H1 (cell line): ENCODE measurements at regions of chr13 and their contacts with region 1.

Region 1: GRCh38 chr13:45194081-45194939 is 6.5 kb downstream of the KCTD4 start:
- DNase-seq: peak in 1 of 2 experiments; percentile 9
- H3K4me3 ChIP-seq: no peak overlapping the region
- H3K27ac ChIP-seq: no peak overlapping the region
- H3K4me1 ChIP-seq: no peaks in the 10 kb centered on the region
- H3K27me3 ChIP-seq: no peaks in the 10 kb centered on the region
- CTCF ChIP-seq: peak; percentile 52 to 71 (median 60)
- EP300 ChIP-seq: no peak
- POLR2A ChIP-seq: no peak
- RAD21 ChIP-seq: peak; percentile 66 to 74

Region 2: GRCh38 chr13:45004096-45004495 is 190.2 kb before region 1 on chr13:
- CTCF ChIA-PET with region 1: no interaction called
- POLR2A ChIA-PET with region 1: no interaction called
- DNase-seq: no peak
- H3K4me3 ChIP-seq: no peak overlapping the region
- H3K27ac ChIP-seq: no peak overlapping the region
- H3K4me1 ChIP-seq: no peaks in the 10 kb centered on the region
- H3K27me3 ChIP-seq: no peaks in the 10 kb centered on the region
- CTCF ChIP-seq: no peak
- EP300 ChIP-seq: no peak
- POLR2A ChIP-seq: no peak
- RAD21 ChIP-seq: no peak

Region 3: DNA sequence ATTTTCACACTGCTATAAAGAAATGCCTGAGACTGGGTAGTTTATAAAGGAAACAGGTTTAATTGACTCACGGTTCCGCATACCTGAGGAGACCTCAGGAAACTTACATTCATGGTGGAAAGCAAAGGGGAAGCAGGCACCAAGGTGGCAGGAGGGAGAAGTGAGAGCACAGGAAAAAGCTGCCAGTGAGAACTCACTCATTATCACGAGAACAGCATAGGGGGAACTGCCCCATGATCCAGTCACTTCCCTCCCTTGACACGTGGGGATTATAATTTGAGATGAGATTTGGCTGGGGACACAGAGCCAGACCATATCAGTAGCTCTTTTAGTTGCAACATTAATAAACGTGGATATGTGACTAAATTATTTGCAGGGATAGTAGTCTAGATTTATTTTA is 10.8 kb after region 1 on chr13:
- CTCF ChIA-PET with region 1: interaction called, 10 read pairs
- POLR2A ChIA-PET with region 1: no interaction called
- DNase-seq: no peak
- H3K4me3 ChIP-seq: no peak overlapping the region
- H3K27ac ChIP-seq: no peak overlapping the region
- H3K4me1 ChIP-seq: peaks cover 0 to 3% (median 0%) of the 10 kb centered on the region in 4 experiments; a peak in 2 of 7 replicates
- H3K27me3 ChIP-seq: no peaks in the 10 kb centered on the region
- CTCF ChIP-seq: no peak
- EP300 ChIP-seq: no peak
- POLR2A ChIP-seq: no peak
- RAD21 ChIP-seq: no peak

Region 4: GRCh38 chr13:45310341-45311125 is 116.2 kb after region 1 on chr13:
- CTCF ChIA-PET with region 1: interaction called, 11 read pairs
- POLR2A ChIA-PET with region 1: no interaction called
- DNase-seq: no peak
- H3K4me3 ChIP-seq: peak overlapping the region; percentile 9 to 65 (median 44); a peak in 7 of 8 replicates
- H3K27ac ChIP-seq: no peak overlapping the region
- H3K4me1 ChIP-seq: peaks cover 0 to 17% (median 12%) of the 10 kb centered on the region in 4 experiments
- H3K27me3 ChIP-seq: no peaks in the 10 kb centered on the region
- CTCF ChIP-seq: no peak
- EP300 ChIP-seq: no peak
- POLR2A ChIP-seq: no peak
- RAD21 ChIP-seq: no peak

Region 5: DNA sequence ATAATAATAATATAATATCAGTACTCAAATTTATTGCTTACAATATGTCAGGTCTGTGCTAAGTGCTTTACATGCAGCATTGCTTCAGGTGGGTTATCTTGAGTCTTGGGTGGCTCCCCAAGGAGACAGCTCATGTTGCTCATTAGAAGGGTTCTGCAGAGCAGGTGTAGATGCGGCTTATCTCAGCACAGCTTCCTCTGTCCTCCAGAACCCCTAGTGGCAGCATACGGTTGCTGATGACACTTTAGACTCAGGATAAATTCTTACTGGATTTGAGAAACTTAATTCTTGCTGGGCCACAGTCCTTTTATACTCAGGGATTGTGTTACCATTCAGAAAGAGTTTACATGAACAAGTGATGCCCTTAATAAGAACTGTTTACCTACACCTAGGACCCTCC is 279.3 kb after region 1 on chr13:
- CTCF ChIA-PET with region 1: no interaction called
- POLR2A ChIA-PET with region 1: no interaction called
- DNase-seq: no peak
- H3K4me3 ChIP-seq: no peak overlapping the region
- H3K27ac ChIP-seq: no peak overlapping the region
- H3K4me1 ChIP-seq: peaks cover 0 to 2% (median 0%) of the 10 kb centered on the region in 4 experiments; a peak in 2 of 7 replicates
- H3K27me3 ChIP-seq: no peaks in the 10 kb centered on the region
- CTCF ChIP-seq: peak; percentile 25 to 66 (median 53)
- EP300 ChIP-seq: no peak
- POLR2A ChIP-seq: no peak
- RAD21 ChIP-seq: peak; percentile 39 to 47